ENCODE measurements at regions of chr15 and their contacts with region 1.

Region 1: DNA sequence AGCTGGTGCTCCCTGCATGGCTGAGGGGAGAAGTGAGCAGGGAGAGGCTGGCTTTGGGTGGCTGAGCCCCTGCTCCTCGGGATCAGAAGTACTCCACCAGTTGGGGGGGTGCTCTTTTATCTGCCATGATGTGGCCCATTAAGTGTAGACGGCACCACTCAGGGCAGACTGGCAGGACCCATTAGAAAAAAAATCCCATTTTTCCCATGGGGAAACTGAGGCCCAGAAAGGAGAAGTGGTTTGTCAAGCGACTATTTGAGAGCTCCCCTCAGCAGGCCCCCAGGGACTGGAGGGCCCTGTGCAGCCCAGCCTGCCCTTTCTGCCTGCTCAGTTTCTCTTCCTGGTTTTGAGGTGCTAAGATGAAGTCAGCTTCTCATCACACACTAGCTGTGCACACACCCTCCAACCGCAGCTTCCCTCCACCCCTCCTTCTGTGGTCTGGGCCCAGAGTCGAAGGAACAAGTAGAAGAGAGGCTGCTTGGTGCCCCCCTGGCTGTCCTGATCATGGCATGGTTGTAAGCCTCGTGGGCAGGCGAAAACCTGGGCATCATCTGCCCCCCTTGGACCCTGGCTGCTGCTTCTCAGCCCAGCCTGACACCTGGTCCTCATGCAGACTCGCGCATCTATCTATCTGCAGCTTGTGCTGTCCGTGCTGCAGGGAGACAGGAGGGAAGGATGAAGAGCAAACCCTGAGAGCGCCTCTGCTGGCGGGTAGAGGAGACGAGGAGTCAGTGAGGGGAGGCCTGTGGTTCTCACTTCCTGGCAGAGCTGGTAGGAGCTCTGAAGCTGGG is 5.6 kb downstream of the CSK start:
- DNase-seq: peak; percentile 89
- H3K4me3 Mint-ChIP-seq: peak overlapping the region; percentile 86
- H3K27ac Mint-ChIP-seq: peak overlapping the region; percentile 98
- H3K4me1 Mint-ChIP-seq: peaks cover 65% of the 10 kb centered on the region
- H3K27me3 Mint-ChIP-seq: no peaks in the 10 kb centered on the region

Region 2: GRCh38 chr15:74598126-74598842 is 189.2 kb before region 1 on chr15:
- intact Hi-C with region 1: no loop called
- DNase-seq: peak; percentile 87
- H3K4me3 Mint-ChIP-seq: peak overlapping the region; percentile 100
- H3K27ac Mint-ChIP-seq: peak overlapping the region; percentile 100
- H3K4me1 Mint-ChIP-seq: peaks cover 19% of the 10 kb centered on the region
- H3K27me3 Mint-ChIP-seq: no peaks in the 10 kb centered on the region

Region 3: GRCh38 chr15:74716644-74717043 is 70.8 kb before region 1 on chr15:
- intact Hi-C with region 1: no loop called
- DNase-seq: no peak
- H3K4me3 Mint-ChIP-seq: no peak overlapping the region
- H3K27ac Mint-ChIP-seq: no peak overlapping the region
- H3K4me1 Mint-ChIP-seq: no peaks in the 10 kb centered on the region
- H3K27me3 Mint-ChIP-seq: peaks cover 3% of the 10 kb centered on the region

Region 4: GRCh38 chr15:74739905-74740304 is 47.5 kb before region 1 on chr15:
- intact Hi-C with region 1: no loop called
- DNase-seq: no peak
- H3K4me3 Mint-ChIP-seq: no peak overlapping the region
- H3K27ac Mint-ChIP-seq: no peak overlapping the region
- H3K4me1 Mint-ChIP-seq: peaks cover 6% of the 10 kb centered on the region
- H3K27me3 Mint-ChIP-seq: no peaks in the 10 kb centered on the region

Region 5: DNA sequence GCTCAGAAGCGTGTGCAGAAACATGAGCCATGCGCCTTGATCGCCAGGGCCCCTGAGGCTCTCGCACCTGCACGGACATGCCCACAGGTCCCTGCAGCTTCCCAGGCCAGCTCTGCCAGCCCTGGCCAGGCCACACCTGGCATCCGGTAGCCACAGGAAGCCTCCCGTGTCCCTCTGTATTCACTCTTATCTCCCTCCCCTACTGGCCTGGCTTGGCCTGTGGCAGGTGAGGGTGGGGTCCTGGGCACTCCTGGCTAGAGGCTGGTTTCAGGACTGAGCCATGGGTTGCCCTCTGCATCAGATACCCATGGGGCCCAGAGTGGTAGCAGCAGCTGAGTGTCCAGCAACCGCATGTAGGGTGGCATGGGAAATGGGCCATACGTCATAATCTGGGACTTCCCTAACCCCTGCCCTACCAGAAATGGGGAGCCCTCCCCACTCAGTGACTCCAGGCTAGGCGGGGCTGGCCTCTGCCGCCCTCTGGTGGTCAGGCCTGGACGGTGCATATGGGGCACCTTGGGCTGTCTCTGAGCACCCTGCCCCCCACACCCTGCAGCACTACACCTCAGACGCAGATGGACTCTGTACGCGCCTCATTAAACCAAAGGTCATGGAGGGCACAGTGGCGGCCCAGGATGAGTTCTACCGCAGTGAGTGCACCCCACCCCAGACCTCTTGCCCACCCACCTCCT is 12.6 kb after region 1 on chr15:
- intact Hi-C with region 1: loop called (anchors 1 kb)
- DNase-seq: peak; percentile 82
- H3K4me3 Mint-ChIP-seq: peak overlapping the region; percentile 45
- H3K27ac Mint-ChIP-seq: peak overlapping the region; percentile 81
- H3K4me1 Mint-ChIP-seq: peaks cover 37% of the 10 kb centered on the region
- H3K27me3 Mint-ChIP-seq: no peaks in the 10 kb centered on the region

Region 6: DNA sequence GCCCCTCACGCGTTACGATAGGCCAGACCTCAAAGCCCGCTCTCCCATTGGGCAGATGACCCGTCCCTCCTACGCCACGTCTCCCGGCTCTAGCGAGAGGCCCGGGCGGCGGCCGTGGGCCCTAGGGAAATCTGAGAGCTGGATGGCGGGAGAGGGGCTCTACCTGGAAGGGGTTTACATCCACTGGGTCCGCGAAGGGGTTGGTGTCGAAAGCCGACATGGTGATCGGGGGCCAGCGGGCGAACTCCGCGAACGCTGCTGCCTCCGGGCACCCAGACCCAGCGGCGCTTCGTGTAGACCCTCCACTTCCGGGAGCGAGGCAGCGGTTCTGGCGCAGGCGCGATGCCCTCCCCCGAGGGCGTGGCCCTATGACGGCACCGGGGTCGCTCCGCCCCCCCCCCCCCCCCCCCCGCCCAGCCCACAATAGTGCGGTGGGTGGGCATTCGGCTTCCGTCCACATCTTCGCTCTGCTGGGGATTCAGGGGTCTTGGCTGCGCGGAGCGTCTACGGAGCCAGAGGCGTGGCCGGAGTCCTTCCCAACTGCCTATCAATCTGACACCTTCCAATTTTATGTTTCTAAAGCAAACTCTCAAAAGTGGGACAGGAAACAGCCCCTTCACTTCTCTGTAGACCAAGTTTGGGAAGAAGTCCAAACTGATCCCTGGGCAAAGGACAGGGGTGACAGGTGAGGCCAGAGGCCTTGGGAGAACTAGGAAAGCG is 85.8 kb after region 1 on chr15 and contains the start of gene SCAMP2:
- intact Hi-C with region 1: loop called (anchors 1 kb)
- DNase-seq: peak; percentile 86
- H3K4me3 Mint-ChIP-seq: peak within 1 kb of the TSS; percentile 97
- H3K27ac Mint-ChIP-seq: peak within 1 kb of the TSS; percentile 86
- H3K4me1 Mint-ChIP-seq: peaks cover 34% of the 10 kb centered on the region
- H3K27me3 Mint-ChIP-seq: peaks cover 4% of the 10 kb centered on the region
- total RNA-seq, gene SCAMP2: 93.7 and 103 TPM in 2 replicates